Common myeloid progenitor, CD34-positive (primary cell): ENCODE measurements at regions of chr14 and their contacts with region 1.

Region 1: GRCh38 chr14:21269252-21270046 is at the start of gene HNRNPC:
- DNase-seq: peak; percentile 100
- H3K4me3 ChIP-seq: peak within 1 kb of the TSS; percentile 84 to 100 (median 99)
- H3K27ac ChIP-seq: peak within 1 kb of the TSS; percentile 98 to 99
- H3K4me1 ChIP-seq: peaks cover 13 to 48% (median 35%) of the 10 kb centered on the region in 4 experiments
- H3K27me3 ChIP-seq: no peaks in the 10 kb centered on the region

Region 2: DNA sequence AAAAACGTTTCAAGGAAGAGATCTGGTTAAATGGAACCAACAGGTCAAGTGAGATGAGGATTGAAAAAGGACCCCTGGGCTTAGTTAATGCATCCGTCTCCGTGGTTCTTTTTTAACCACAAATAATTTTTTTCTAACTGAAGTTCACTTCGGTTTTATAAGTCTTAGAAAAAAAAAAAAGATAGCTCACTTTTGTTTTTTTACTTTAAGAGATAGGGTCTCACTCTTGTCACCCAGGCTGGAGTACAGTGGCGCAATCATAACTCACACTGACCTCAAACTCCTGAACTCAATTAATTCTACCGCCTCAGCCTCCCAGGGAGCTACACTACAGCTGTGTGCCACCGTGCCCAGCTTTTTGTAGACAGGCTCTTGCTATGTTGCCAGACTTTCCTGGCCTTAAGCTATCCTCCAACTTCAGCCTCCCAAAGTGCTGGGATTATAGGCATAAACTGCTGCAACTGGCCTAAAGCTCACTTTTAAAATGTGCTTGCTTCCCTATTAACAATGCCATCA is 12.0 kb before region 1 on chr14:
- CTCF ChIA-PET with region 1: interaction called, 20 read pairs
- POLR2A ChIA-PET with region 1: no interaction called
- DNase-seq: peak in 2 of 3 donors; percentile 47 to 62
- H3K4me3 ChIP-seq: peak overlapping the region in 2 of 7 experiments; percentile 26 to 28
- H3K27ac ChIP-seq: peak overlapping the region in 1 of 2 experiments; percentile 32
- H3K4me1 ChIP-seq: peaks cover 10 to 39% (median 17%) of the 10 kb centered on the region in 4 experiments
- H3K27me3 ChIP-seq: no peaks in the 10 kb centered on the region

Region 3: DNA sequence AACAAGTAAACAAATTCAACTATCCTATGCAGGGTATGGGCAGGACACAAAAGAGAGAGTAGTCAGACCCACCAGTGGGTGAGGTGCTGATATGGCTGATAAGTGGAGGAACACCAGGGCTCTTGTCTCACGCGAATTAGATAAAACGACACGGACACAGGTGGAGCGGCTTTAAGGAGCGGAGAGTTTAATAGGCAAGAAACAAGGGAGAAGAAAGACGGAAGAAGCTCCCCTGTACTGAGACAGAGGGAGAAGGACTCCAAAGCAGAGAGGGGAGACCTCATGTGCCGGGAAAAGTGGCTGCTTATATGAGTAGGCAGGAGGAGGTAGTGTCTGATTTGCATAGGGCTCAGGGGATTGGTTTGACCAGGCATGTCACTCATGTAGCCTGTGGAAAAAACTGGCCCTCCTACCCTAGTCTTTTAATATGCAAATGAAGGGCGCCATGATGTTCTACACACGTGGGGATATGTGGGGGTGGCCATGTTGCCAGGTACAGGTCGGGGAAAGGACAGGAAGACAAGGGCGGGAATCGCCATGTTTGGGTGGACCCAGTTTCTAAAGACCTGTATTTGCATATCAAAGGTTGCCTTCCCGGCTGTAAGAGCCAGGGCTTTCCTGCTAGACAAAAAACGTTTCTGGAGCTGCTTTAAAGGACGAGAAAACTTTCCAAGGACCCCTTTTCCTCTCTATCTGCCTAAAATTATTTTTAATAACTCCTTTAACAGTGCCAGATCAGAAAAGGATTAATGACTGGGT is 39.2 kb after region 1 on chr14:
- CTCF ChIA-PET with region 1: interaction called, 11 read pairs
- POLR2A ChIA-PET with region 1: no interaction called
- DNase-seq: peak; percentile 83 to 92 (median 91)
- H3K4me3 ChIP-seq: peak overlapping the region; percentile 26 to 76 (median 62)
- H3K27ac ChIP-seq: peak overlapping the region; percentile 33 to 75
- H3K4me1 ChIP-seq: peaks cover 5 to 12% (median 10%) of the 10 kb centered on the region in 4 experiments
- H3K27me3 ChIP-seq: no peaks in the 10 kb centered on the region

Region 4: GRCh38 chr14:21334202-21334899 is 64.9 kb after region 1 on chr14:
- CTCF ChIA-PET with region 1: no interaction called
- POLR2A ChIA-PET with region 1: no interaction called
- DNase-seq: no peak
- H3K4me3 ChIP-seq: no peak overlapping the region
- H3K27ac ChIP-seq: no peak overlapping the region
- H3K4me1 ChIP-seq: no peaks in the 10 kb centered on the region
- H3K27me3 ChIP-seq: no peaks in the 10 kb centered on the region

Region 5: DNA sequence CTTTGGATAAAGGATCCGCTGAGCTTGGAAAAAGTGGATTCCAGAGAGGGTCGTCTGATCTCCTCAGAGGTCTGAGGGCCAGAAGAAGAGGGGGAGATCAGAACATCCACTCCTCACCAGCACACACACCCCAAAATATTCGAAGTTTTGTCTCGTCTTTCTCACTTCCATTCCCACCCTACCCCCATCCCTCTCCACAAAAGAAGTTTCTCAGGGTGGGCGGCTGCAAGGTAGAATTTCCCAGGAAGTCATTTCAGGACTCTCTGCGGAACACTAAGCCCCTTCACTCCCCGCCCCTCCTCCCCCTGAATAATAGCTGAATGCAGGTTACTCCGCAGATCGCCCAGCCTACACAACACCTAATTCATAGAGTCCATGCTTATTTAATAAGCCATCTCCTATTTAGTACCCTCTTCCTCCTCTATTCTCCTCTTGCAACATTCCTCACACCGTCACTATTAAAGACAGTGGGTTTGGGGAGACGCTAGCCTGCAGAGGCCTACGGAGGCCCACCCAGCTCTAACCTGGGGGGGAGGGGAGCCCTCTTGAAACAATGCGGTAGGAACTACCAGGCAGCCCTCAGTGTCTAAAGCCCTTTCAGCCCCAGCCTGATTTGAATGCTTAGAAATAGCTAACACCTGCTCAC is 257.3 kb after region 1 on chr14:
- CTCF ChIA-PET with region 1: no interaction called
- POLR2A ChIA-PET with region 1: no interaction called
- DNase-seq: peak in 2 of 3 donors; percentile 32 to 50
- H3K4me3 ChIP-seq: peak overlapping the region; percentile 4 to 89 (median 72)
- H3K27ac ChIP-seq: peak overlapping the region in 1 of 2 experiments; percentile 64
- H3K4me1 ChIP-seq: peaks cover 2 to 22% (median 13%) of the 10 kb centered on the region in 4 experiments
- H3K27me3 ChIP-seq: peaks cover 0 to 1% (median 0%) of the 10 kb centered on the region in 5 experiments

Region 6: GRCh38 chr14:21768116-21768874 is 498.8 kb after region 1 on chr14:
- CTCF ChIA-PET with region 1: no interaction called
- POLR2A ChIA-PET with region 1: no interaction called
- DNase-seq: peak; percentile 46 to 67 (median 64)
- H3K4me3 ChIP-seq: no peak overlapping the region
- H3K27ac ChIP-seq: no peak overlapping the region
- H3K4me1 ChIP-seq: peaks cover 0 to 3% (median 0%) of the 10 kb centered on the region in 4 experiments
- H3K27me3 ChIP-seq: no peaks in the 10 kb centered on the region